ENCODE measurements at regions of chr11 and their contacts with region 1.

Region 1: DNA sequence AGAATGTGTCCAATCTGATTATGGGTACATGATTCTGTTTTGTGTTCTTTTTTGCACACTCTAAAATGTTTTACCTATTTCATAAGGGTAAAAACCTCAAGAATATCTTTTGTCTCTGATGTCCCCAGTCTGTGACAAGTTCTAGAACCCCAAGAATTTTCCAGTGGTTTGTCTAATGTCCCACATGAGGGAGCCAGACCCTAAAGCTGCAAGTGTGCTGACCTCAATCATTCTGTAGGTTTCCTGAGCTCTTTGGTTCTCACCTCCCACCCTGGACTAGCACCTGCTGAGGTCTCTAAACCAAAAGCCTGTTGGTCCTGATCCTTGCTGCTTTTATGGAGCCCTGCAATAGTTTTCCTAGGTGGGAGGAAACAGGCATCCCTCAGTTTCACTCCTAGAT is 149.8 kb upstream of the MPPED2 start:
- DNase-seq: no peak
- ATAC-seq: no peak
- H3K4me3 ChIP-seq: no peak overlapping the region
- H3K27ac ChIP-seq: no peak overlapping the region
- H3K4me1 ChIP-seq: no peaks in the 10 kb centered on the region
- H3K27me3 ChIP-seq: no peaks in the 10 kb centered on the region
- CTCF ChIP-seq: no peak
- EP300 ChIP-seq: no peak
- POLR2A ChIP-seq: no peak
- RAD21 ChIP-seq: no peak

Region 2: DNA sequence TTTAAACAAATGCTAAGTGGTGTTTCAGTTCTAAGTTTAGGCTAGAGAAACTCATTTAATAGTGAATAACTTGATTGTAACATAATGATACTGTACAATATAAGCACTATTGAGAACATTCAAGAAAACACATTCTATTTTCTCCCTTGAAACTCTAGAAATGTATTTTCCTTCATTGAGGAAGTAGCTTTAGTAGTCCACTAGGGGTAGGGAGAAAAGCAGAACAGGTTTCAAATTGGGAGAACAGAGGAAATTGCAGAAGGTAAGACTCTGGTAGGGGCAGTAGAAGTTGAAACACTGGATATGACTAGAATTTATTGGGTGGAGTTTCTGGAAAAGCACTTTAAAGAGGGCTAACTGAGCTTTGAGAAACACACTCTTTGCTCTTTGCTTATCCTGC is 118.2 kb before region 1 on chr11:
- CTCF ChIA-PET with region 1: no interaction called
- POLR2A ChIA-PET with region 1: no interaction called
- in situ Hi-C with region 1: no loop called
- intact Hi-C with region 1: no loop called
- DNase-seq: no peak
- ATAC-seq: no peak
- H3K4me3 ChIP-seq: no peak overlapping the region
- H3K27ac ChIP-seq: no peak overlapping the region
- H3K4me1 ChIP-seq: no peaks in the 10 kb centered on the region
- H3K27me3 ChIP-seq: no peaks in the 10 kb centered on the region
- CTCF ChIP-seq: no peak
- EP300 ChIP-seq: no peak
- POLR2A ChIP-seq: no peak
- RAD21 ChIP-seq: no peak

Region 3: GRCh38 chr11:30853439-30853838 is 117.5 kb after region 1 on chr11:
- CTCF ChIA-PET with region 1: no interaction called
- POLR2A ChIA-PET with region 1: no interaction called
- in situ Hi-C with region 1: no loop called
- intact Hi-C with region 1: loop called (anchors 10 kb)
- DNase-seq: no peak
- ATAC-seq: no peak
- H3K4me3 ChIP-seq: no peak overlapping the region
- H3K27ac ChIP-seq: no peak overlapping the region
- H3K4me1 ChIP-seq: no peaks in the 10 kb centered on the region
- H3K27me3 ChIP-seq: no peaks in the 10 kb centered on the region
- CTCF ChIP-seq: no peak
- EP300 ChIP-seq: no peak
- POLR2A ChIP-seq: no peak
- RAD21 ChIP-seq: no peak